BJ (cell line): ENCODE measurements at regions of chr19 and their contacts with region 1.

Region 1: GRCh38 chr19:48999481-49000325 is 6.0 kb downstream of the RUVBL2 start:
- DNase-seq: no peak
- H3K4me3 ChIP-seq: no peak overlapping the region
- H3K27me3 ChIP-seq: no peaks in the 10 kb centered on the region
- CTCF ChIP-seq: peak; percentile 85

Region 2: DNA sequence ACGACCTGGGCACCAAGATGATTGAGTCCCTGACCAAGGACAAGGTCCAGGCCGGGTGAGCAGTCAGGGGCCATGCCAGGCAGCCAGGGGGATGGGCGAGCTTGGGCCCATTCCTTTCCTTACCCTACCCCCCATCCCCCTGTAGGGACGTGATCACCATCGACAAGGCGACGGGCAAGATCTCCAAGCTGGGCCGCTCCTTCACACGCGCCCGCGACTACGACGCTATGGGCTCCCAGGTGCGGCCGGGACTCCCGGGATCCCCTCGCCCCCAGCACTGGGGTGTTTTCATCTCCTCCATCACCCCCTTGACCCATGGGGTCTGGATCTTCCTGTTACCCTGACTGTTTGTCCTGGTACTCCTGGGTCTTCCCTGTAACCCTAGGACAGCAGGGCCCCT is 10.1 kb after region 1 on chr19:
- CTCF ChIA-PET with region 1: interaction called, 31 read pairs
- POLR2A ChIA-PET with region 1: no interaction called
- DNase-seq: no peak
- H3K4me3 ChIP-seq: no peak overlapping the region
- H3K27me3 ChIP-seq: no peaks in the 10 kb centered on the region
- CTCF ChIP-seq: no peak

Region 3: GRCh38 chr19:49017666-49018351 is 18.1 kb after region 1 on chr19:
- CTCF ChIA-PET with region 1: interaction called, 34 read pairs
- POLR2A ChIA-PET with region 1: no interaction called
- DNase-seq: no peak
- H3K4me3 ChIP-seq: peak overlapping the region; percentile 45
- H3K27me3 ChIP-seq: no peaks in the 10 kb centered on the region
- CTCF ChIP-seq: peak; percentile 74

Region 4: GRCh38 chr19:49057636-49058234 is 58.0 kb after region 1 on chr19 and contains the start of gene CGB7:
- CTCF ChIA-PET with region 1: interaction called, 14 read pairs
- POLR2A ChIA-PET with region 1: no interaction called
- DNase-seq: no peak
- H3K4me3 ChIP-seq: peak within 1 kb of the TSS; percentile 40
- H3K27me3 ChIP-seq: no peaks in the 10 kb centered on the region
- CTCF ChIP-seq: no peak
- polyA plus RNA-seq, gene CGB7: 0.27 and 0.28 TPM in 2 replicates

Region 5: GRCh38 chr19:49073514-49074378 is 74.0 kb after region 1 on chr19:
- CTCF ChIA-PET with region 1: interaction called, 13 read pairs
- POLR2A ChIA-PET with region 1: no interaction called
- DNase-seq: no peak
- H3K4me3 ChIP-seq: no peak overlapping the region
- H3K27me3 ChIP-seq: peaks cover 12% of the 10 kb centered on the region
- CTCF ChIP-seq: peak; percentile 34

Region 6: DNA sequence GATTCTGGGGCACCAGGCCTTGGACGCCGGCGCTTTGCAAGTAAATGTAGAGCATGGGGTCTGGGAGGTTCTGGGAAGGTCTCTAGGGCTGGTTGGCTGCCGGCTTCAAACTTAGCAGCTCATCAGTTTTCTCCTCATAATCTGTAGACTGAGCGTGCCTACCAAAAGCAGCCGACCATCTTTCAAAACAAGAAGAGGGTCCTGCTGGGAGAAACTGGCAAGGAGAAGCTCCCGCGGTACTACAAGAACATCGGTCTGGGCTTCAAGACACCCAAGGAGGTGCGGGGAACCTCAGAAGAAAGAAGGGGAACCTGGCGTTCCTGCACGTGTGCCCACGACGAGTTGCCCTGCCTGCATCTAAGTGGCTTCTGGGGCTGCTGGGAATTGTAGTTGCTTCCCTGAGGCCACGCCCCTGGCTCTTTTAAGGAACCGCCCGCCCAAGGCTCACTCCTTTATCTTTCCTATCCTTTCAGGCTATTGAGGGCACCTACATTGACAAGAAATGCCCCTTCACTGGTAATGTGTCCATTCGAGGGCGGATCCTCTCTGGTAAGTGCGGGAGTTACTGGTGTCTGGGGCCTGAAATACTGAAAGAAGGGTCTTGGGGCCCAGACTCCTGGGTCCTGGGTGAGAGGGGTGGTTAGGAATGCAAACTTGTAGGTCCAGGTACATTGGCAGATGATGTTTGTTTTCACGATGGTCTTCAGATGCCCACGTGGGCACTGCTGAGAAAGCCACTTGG is 497.5 kb after region 1 on chr19:
- CTCF ChIA-PET with region 1: no interaction called
- POLR2A ChIA-PET with region 1: no interaction called
- DNase-seq: no peak
- H3K4me3 ChIP-seq: peak overlapping the region; percentile 67
- H3K27me3 ChIP-seq: no peaks in the 10 kb centered on the region
- CTCF ChIP-seq: no peak

Region 7: GRCh38 chr19:50890422-50891252 is 1890.9 kb after region 1 on chr19:
- CTCF ChIA-PET with region 1: no interaction called
- POLR2A ChIA-PET with region 1: no interaction called
- DNase-seq: no peak
- H3K4me3 ChIP-seq: no peak overlapping the region
- H3K27me3 ChIP-seq: no peaks in the 10 kb centered on the region
- CTCF ChIP-seq: no peak